ENCODE measurements at regions of chr4 and their contacts with region 1.

Region 1: GRCh38 chr4:57291911-57292310 is 181.7 kb upstream of the IGFBP7 start:
- DNase-seq: no peak
- H3K4me3 ChIP-seq: no peak overlapping the region
- H3K27ac ChIP-seq: no peak overlapping the region
- H3K4me1 ChIP-seq: no peaks in the 10 kb centered on the region
- H3K27me3 ChIP-seq: no peaks in the 10 kb centered on the region
- CTCF ChIP-seq: no peak

Region 2: GRCh38 chr4:57020467-57021101 is 271.3 kb before region 1 on chr4:
- intact Hi-C with region 1: loop called (anchors 10 kb)
- DNase-seq: no peak
- H3K4me3 ChIP-seq: no peak overlapping the region
- H3K27ac ChIP-seq: peak overlapping the region in 1 of 2 donors; percentile 5
- H3K4me1 ChIP-seq: no peaks in the 10 kb centered on the region
- H3K27me3 ChIP-seq: no peaks in the 10 kb centered on the region
- CTCF ChIP-seq: no peak

Region 3: GRCh38 chr4:57080781-57081650 is 210.9 kb before region 1 on chr4:
- intact Hi-C with region 1: no loop called
- DNase-seq: peak in 1 of 2 donors; percentile 90
- H3K4me3 ChIP-seq: peak overlapping the region in 1 of 2 donors; percentile 3
- H3K27ac ChIP-seq: peak overlapping the region; percentile 95 to 96
- H3K4me1 ChIP-seq: peaks cover 19 to 68% of the 10 kb centered on the region in 2 donors
- H3K27me3 ChIP-seq: no peaks in the 10 kb centered on the region
- CTCF ChIP-seq: no peak